MCF 10A (cell line): ENCODE measurements at regions of chr9 and their contacts with region 1.

Region 1: GRCh38 chr9:136283291-136284235 is 20.3 kb downstream of the CCDC187 start:
- DNase-seq: peak; percentile 68
- H3K4me3 Mint-ChIP-seq: no peak overlapping the region
- H3K27ac Mint-ChIP-seq: no peak overlapping the region
- H3K4me1 Mint-ChIP-seq: no peaks in the 10 kb centered on the region
- H3K27me3 Mint-ChIP-seq: peaks cover 20% of the 10 kb centered on the region
- CTCF ChIP-seq: peak; percentile 76

Region 2: GRCh38 chr9:135602789-135603481 is 680.6 kb before region 1 on chr9:
- CTCF ChIA-PET with region 1: no interaction called
- POLR2A ChIA-PET with region 1: no interaction called
- intact Hi-C with region 1: loop called (anchors 5 kb)
- DNase-seq: peak; percentile 51
- H3K4me3 Mint-ChIP-seq: no peak overlapping the region
- H3K27ac Mint-ChIP-seq: no peak overlapping the region
- H3K4me1 Mint-ChIP-seq: no peaks in the 10 kb centered on the region
- H3K27me3 Mint-ChIP-seq: peaks cover 39% of the 10 kb centered on the region
- CTCF ChIP-seq: peak; percentile 72

Region 3: GRCh38 chr9:136143216-136144001 is 140.2 kb before region 1 on chr9:
- CTCF ChIA-PET with region 1: interaction called, 3 read pairs
- POLR2A ChIA-PET with region 1: no interaction called
- intact Hi-C with region 1: loop called (anchors 10 kb)
- DNase-seq: peak; percentile 45
- H3K4me3 Mint-ChIP-seq: no peak overlapping the region
- H3K27ac Mint-ChIP-seq: no peak overlapping the region
- H3K4me1 Mint-ChIP-seq: no peaks in the 10 kb centered on the region
- H3K27me3 Mint-ChIP-seq: no peaks in the 10 kb centered on the region
- CTCF ChIP-seq: no peak

Region 4: GRCh38 chr9:136170006-136170901 is 113.3 kb before region 1 on chr9:
- CTCF ChIA-PET with region 1: interaction called, 7 read pairs
- POLR2A ChIA-PET with region 1: no interaction called
- intact Hi-C with region 1: loop called (anchors 1 kb)
- DNase-seq: peak; percentile 36
- H3K4me3 Mint-ChIP-seq: no peak overlapping the region
- H3K27ac Mint-ChIP-seq: no peak overlapping the region
- H3K4me1 Mint-ChIP-seq: no peaks in the 10 kb centered on the region
- H3K27me3 Mint-ChIP-seq: peaks cover 36% of the 10 kb centered on the region
- CTCF ChIP-seq: peak; percentile 82

Region 5: DNA sequence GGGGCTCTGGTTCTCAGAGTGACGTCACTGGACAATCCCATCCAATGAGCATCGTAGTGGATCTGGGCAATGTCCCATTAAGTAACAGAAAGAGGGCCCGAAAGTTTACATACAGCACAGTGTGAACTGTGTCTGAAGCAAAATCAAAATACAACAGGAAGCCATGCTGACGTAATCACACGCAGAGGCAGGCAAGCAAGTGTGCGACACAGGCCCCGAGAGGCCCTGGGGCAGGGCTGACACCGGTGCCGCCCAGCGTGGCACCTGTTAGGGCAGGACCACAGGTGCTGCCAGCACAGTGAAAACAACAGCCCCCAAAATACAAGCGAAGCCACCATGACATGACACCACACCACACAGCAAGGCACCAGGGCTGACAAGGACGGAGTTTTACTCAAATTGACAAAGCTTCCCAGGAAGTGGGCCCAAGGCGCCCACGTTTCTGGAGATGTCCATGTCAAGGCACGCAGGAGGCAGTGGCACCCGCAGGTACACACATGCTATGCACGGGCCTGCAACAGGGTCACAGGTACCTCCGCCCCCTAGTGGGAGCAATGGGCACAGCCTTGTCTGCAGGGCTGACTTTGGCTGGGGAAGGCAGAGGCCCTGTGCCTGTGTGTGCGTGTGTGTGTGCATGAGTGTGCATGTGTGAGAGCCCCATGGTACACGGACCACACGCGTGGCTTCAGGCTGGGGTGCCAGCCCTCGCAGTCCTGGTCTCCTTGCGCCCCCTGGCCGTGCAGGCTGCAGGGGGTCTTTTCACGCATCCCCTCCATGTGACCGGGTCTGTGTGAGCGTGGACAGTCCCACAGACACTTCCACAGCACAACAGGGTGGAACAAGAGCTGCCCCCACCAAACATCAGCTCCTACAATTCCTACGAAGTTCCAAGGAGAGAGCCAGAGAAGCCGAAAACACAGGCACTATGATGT is 57.5 kb before region 1 on chr9:
- CTCF ChIA-PET with region 1: no interaction called
- POLR2A ChIA-PET with region 1: no interaction called
- intact Hi-C with region 1: loop called (anchors 2 kb)
- DNase-seq: peak; percentile 65
- H3K4me3 Mint-ChIP-seq: no peak overlapping the region
- H3K27ac Mint-ChIP-seq: no peak overlapping the region
- H3K4me1 Mint-ChIP-seq: peaks cover 14% of the 10 kb centered on the region
- H3K27me3 Mint-ChIP-seq: no peaks in the 10 kb centered on the region
- CTCF ChIP-seq: peak; percentile 85